GM13976 (cell line): ENCODE measurements at regions of chr17 and their contacts with region 1.

Region 1: DNA sequence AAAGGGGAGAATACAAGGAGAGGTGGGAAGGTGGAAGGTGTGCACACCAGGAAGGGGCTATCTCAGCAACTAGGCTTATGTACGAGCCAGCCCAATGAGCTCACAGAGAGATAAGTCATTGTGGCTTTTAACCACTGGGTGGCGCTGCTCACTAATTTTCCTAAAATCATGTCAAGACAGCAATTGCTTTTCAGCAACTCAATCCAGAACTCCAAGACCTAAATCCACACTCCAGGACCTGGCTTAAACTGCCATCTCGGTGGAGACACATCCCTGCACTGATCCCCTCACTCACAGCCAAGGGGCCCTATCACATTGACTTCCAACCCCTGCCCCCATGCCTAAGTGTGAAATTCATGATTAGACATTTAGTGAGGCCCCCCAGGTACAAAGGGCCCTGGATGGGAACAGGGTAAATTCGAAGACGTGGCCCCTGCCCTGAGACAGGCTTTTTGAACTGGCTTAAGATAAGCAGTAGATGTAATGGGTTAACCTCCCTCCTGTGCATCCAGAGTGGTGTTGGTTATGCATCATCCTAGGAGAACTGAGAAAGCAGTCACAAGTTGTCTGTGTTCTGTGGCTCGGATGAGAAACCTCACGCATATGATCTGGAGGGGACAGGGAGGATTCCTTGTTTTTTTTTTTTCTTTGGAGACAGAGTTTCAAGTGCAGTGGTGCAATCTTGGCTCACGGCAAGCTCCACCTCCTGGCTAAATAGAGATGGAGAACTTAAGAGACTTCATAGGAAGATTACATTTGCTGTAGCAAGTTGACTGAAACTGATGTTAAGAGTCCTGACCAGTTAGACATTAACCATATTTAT is 11.5 kb downstream of the CCL16 start:
- DNase-seq: peak; percentile 73
- CTCF ChIP-seq: peak; percentile 87

Region 2: DNA sequence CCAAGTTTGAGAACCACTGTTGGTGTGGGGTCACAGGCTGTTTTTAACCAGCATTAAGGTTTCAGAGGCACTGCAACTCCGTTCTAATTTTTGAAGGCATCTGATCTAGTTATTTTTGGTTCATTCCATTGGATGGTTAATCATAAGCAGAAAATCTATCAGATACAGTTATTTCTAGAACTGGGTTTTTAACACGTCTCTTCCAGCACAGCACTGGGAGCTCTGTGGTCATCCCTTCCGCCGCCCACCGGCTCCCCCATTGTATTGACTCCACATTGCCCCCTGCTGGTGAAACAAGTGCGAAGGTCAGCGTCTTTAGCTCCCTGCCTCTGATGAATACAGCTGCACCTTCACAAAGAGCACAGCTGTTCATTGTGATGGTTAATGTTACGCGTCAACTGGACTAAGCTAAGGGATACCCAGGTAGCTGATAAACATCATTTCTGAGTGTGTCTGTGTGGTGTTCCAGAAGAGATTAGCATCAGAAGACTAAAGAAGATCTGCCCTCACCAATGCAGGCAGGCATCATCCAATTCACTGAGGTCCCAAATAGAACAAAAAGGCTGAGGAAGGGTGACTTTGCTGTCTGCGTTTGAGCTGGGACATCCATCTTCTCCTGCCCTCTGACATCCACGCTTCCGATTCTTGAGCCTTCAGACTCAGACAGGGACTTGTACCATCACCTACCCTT is 102.8 kb after region 1 on chr17:
- in situ Hi-C with region 1: loop called (anchors 10 kb)
- DNase-seq: peak; percentile 73
- CTCF ChIP-seq: peak; percentile 72

Region 3: DNA sequence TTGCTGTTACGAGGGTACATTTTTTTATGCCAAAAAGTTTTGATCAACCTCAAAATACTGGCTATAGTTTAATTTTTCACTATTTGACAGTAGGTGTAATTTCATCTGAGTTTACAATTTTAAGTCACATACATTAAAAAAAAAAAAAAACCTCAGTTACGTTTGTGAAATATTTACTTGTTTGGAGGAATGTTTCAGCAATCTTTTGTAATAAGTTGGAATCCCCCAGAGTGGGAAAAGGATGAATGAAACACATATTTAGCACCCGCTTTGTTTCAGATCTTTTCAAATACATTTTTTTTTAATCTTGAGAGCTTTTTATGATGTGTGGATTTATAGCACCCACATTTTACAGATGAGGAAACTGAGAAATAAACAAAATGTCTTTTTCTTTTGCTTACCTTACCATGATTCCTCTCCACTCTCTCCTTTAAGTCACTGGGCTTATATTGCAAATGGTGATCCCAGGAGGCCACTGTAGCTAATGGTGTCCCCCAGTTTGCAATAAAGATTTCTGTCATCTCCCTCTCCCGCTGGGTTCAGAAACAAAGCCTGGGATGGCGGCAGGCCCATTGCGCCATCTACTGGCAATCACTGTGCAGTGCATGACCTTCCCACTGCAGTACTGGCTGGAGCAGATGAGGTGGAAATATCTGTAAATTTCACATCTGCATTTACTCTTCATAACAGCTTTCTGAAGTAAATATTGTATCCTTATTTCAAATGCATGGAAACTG is 179.0 kb after region 1 on chr17:
- in situ Hi-C with region 1: loop called (anchors 10 kb)
- DNase-seq: peak; percentile 76
- CTCF ChIP-seq: peak; percentile 98

Region 4: DNA sequence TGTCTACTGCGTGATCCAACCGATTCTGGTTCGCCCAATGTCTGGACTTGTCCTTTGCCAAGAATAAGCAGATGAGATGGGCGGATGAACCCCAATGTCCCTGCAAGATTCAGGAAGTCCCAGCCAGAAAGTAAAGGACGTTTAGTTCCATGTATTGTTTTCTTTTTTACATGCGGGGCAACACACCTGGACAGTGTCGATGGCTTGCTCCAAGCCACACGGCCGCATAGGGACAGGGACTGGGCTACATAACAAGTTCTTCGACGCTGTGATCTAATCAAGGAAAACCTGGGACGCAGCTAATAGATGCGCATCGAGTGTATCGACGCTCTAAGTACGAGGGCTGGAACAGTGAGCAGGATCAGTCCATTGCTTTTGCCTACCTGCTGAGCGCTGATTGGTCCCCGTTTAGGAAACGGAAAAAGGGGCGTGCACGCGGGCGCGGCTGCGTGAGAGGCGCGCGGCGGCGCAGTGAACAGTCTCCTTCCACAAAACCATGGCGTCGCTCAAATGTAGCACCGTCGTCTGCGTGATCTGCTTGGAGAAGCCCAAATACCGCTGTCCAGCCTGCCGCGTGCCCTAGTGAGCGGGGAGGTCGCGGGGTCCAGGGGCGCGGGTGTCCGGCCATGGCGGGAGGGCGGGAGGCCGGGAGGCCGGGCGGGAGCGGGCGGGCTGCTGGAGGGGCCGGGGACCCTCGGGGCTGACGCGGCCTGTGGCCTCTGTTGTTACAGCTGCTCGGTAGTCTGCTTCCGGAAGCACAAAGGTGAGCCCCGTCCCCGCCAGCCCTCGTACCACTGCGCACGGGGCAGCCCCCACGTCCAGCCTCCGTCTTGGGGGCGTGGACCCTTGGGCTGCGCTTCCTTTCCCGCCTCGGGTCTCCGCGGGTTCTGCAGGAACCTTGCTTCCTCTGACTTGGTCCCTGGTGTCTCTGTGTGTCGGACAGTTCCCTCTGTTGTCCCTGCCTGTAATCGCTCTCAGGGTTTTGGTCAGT is 516.7 kb after region 1 on chr17 and contains the start of gene ZNHIT3:
- in situ Hi-C with region 1: loop called (anchors 25 kb)
- DNase-seq: peak; percentile 96
- CTCF ChIP-seq: no peak